A549 (cell line): ENCODE measurements at regions of chr17 and their contacts with region 1.

Region 1: DNA sequence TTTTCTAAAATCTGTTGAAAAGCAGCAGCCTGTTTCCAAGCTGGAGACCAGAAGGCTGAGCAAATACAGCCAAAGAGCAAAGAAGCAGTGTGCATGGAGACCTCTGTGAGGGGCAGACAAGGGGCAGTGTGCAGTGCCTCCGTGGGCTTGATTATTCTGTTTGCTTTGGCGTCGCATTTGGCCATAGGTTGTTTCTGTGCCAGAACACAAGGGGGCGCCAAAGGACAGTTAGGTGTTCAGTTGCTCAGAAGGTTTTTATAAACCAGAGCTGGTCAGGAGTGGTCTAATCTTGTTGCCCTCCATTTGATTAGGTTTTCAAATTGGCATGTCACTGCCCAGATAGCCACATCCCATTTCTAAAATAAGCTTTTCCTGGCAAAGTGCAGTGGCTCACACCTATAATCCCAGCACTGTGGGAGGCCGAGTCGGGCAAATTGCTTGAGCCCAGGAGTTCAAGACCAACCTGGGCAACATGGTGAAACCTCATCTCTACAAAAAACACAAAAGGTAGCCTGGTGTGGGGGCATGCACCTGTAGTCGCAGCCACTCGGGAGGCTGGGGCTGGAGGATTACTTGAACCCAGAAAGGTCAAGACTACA is 10.6 kb downstream of the MYH3 start:
- DNase-seq: peak; percentile 55 to 74
- ATAC-seq: peak; percentile 85 to 91
- H3K4me3 ChIP-seq: no peak overlapping the region
- H3K27ac ChIP-seq: no peak overlapping the region
- H3K4me1 ChIP-seq: no peaks in the 10 kb centered on the region
- CTCF ChIP-seq: peak; percentile 83
- EP300 ChIP-seq: no peak
- POLR2A ChIP-seq: no peak
- RAD21 ChIP-seq: peak; percentile 69 to 71

Region 2: DNA sequence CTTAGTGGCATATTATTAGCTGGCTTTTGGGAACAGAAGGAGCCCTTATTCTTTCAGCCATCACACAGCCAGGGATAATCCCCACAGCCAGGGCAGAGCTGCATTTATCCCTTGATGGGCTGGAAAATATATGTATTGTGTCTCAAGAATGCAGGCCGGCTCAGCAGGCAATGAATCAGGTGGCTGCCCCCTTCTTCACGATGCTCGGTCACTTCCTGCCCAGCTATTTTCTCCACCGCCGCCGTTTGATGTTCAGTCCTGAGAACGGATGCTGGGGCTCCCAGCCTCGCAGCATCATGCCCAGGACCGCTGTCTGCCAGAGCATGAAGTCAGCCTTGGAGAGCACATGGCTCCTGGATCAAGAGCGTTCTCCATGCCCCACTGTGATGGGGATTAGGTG is 14.9 kb after region 1 on chr17:
- CTCF ChIA-PET with region 1: interaction called, 35 read pairs
- POLR2A ChIA-PET with region 1: no interaction called
- DNase-seq: no peak
- ATAC-seq: no peak
- H3K4me3 ChIP-seq: no peak overlapping the region
- H3K27ac ChIP-seq: no peak overlapping the region
- H3K4me1 ChIP-seq: no peaks in the 10 kb centered on the region
- CTCF ChIP-seq: no peak
- EP300 ChIP-seq: no peak
- POLR2A ChIP-seq: no peak
- RAD21 ChIP-seq: no peak

Region 3: DNA sequence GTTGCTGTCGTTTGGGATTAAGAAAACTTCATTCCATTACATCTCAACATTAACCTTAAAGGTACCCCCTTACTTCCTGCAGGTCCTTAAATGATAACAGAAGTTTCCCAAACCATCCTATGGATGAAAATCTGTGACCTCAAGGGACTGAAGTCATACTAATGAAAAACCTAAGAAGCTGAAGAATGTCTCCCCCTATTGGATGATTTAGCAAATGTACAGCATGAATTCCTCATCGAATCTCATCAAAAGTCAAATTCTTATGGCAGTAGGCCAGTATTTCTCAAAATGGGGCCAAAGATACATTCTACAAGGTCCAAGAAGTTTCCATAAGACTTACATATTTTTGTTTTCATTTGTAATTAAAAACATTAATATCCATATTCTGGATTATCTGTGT is 37.4 kb after region 1 on chr17:
- CTCF ChIA-PET with region 1: interaction called, 15 read pairs
- POLR2A ChIA-PET with region 1: no interaction called
- DNase-seq: peak; percentile 21 to 56
- ATAC-seq: peak in 1 of 2 experiments; percentile 48; a peak in 1 of 6 replicates
- H3K4me3 ChIP-seq: no peak overlapping the region
- H3K27ac ChIP-seq: no peak overlapping the region
- H3K4me1 ChIP-seq: no peaks in the 10 kb centered on the region
- CTCF ChIP-seq: peak; percentile 60
- EP300 ChIP-seq: no peak
- POLR2A ChIP-seq: no peak
- RAD21 ChIP-seq: peak in 1 of 2 experiments; percentile 13; a peak in 1 of 5 replicates

Region 4: GRCh38 chr17:10844621-10845387 is 198.3 kb after region 1 on chr17:
- CTCF ChIA-PET with region 1: interaction called, 23 read pairs
- POLR2A ChIA-PET with region 1: no interaction called
- DNase-seq: peak; percentile 82 to 86
- ATAC-seq: peak; percentile 91 to 98
- H3K4me3 ChIP-seq: peak overlapping the region; percentile 38
- H3K27ac ChIP-seq: peak overlapping the region; percentile 34 to 77
- H3K4me1 ChIP-seq: no peaks in the 10 kb centered on the region
- CTCF ChIP-seq: peak; percentile 97
- EP300 ChIP-seq: no peak
- POLR2A ChIP-seq: no peak
- RAD21 ChIP-seq: peak; percentile 90 to 93

Region 5: DNA sequence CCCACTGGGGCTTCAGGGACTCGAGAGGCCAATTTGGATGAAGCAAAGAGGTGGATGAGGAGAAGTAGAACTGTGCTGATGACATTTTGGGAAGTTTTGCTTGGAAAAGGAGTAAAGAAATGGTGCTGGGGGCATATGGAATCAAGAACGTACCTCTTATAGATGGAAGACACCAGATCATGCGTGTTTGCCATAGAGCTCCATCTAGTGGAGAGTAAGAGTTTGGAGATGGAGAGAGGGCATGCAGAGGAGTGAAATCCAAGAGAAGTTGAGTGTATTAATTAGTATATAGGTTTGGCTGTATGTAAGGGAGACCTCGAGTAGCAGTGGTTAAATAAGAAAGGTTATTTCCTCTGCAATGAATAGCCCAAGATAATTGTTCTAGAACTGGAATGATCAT is 650.5 kb after region 1 on chr17:
- CTCF ChIA-PET with region 1: no interaction called
- POLR2A ChIA-PET with region 1: no interaction called
- DNase-seq: peak; percentile 44
- ATAC-seq: peak in 1 of 2 experiments; percentile 82; a peak in 3 of 6 replicates
- H3K4me3 ChIP-seq: no peak overlapping the region
- H3K27ac ChIP-seq: no peak overlapping the region
- H3K4me1 ChIP-seq: no peaks in the 10 kb centered on the region
- CTCF ChIP-seq: peak; percentile 47
- EP300 ChIP-seq: no peak
- POLR2A ChIP-seq: no peak
- RAD21 ChIP-seq: peak in 1 of 2 experiments; percentile 54; a peak in 2 of 5 replicates